CD4-positive, alpha-beta T cell (primary cell): ENCODE measurements at regions of chr21 and their contacts with region 1.

Region 1: DNA sequence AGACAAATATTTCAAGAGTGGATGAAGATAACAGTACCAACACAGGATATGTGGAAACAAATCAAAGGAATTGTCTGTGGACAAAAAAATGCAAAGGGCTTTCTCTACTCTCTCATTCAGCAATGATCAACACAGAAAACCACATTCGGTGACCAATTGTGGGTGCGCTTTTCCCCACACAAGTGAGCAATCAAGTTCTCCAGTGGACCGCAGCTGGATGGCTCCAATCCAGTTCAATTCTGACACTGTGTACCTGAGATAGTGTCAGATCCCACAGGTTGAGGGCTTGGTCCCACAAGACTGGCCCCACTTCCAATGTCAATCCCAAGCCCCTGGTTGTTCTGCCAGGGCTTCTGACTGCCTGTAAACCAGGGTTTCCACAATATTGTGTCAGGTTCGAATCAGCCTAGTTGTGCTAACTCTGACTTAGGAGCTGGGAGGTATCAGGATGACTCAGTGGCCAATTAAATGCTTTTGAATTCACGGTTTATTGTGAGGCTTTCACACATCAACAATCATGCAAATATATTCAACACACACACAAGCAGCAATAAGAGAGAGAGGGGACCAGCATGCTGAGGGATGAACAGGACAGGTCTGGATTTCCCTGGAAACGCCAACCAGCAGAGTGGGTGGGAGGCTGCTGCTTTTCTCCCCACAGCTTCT is 87.0 kb upstream of the BTG3 start:
- DNase-seq: no peak
- ATAC-seq: no peak
- H3K4me3 ChIP-seq: no peak overlapping the region
- H3K4me3 Mint-ChIP-seq: no peak overlapping the region
- H3K27ac ChIP-seq: no peak overlapping the region
- H3K27ac Mint-ChIP-seq: no peak overlapping the region
- H3K4me1 ChIP-seq: no peaks in the 10 kb centered on the region
- H3K4me1 Mint-ChIP-seq: no peaks in the 10 kb centered on the region
- H3K27me3 ChIP-seq: no peaks in the 10 kb centered on the region
- H3K27me3 Mint-ChIP-seq: no peaks in the 10 kb centered on the region
- CTCF ChIP-seq: no peak

Region 2: DNA sequence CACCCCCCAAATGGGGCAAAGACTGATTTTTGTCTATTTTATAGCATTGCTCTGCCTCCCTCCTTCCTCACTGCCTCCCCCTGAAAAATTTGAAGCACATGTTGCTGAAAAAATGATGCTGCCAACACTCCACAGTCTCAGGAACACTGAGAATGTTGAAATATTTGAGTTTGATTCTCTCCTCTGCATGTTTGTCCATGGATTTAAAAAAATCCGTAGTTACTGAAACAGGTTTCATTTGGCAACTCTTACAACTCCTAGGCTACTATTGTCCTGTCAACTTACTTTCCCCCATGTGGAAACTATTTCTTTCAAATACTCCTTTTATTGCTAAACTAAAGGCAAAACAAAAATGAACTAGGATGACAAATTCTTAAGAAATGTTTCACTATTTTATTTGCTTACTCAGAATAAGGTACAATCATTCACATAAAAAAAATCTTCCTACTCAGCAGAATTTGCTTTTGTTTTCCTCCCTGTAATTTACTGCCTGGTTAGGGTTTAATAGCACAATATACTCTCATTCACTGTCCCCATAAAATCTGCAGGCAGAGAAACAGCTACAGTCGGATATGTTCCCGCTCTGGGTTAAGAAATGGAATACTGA is 69.3 kb after region 1 on chr21:
- CTCF ChIA-PET with region 1: no interaction called
- POLR2A ChIA-PET with region 1: no interaction called
- intact Hi-C with region 1: loop called in 1 of 2 experiments (anchors 2 kb)
- DNase-seq: no peak
- ATAC-seq: no peak
- H3K4me3 ChIP-seq: no peak overlapping the region
- H3K4me3 Mint-ChIP-seq: no peak overlapping the region
- H3K27ac ChIP-seq: no peak overlapping the region
- H3K27ac Mint-ChIP-seq: no peak overlapping the region
- H3K4me1 ChIP-seq: no peaks in the 10 kb centered on the region
- H3K4me1 Mint-ChIP-seq: no peaks in the 10 kb centered on the region
- H3K27me3 ChIP-seq: no peaks in the 10 kb centered on the region
- H3K27me3 Mint-ChIP-seq: no peaks in the 10 kb centered on the region
- CTCF ChIP-seq: no peak